ENCODE measurements at regions of chr15 and their contacts with region 1.

Region 1: GRCh38 chr15:25438601-25439368 is at the start of gene UBE3A:
- DNase-seq: peak; percentile 97
- total RNA-seq, gene UBE3A: 87.5 to 103 TPM

Region 2: DNA sequence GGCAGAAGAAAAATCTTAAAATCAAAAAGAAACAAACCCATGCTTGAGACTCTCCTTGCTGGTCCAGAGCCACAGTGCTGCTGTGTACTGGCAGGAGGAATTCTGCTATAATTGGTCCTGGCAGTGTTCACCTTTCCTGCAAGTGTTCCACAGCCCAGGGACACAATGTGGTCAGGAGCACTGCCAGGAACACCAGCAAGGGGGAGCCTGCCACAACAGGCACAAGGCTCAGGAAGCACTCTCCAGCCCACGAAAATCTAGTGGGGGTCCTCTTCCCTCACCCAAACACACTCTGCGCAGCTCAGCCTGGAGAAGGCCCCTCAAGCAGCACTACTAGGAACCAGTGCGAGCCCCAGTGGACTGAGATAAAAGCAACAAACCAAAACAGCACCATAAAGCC is 92.8 kb before region 1 on chr15:
- intact Hi-C with region 1: loop called in 1 of 2 experiments (anchors 10 kb)
- DNase-seq: no peak

Measured in posterior vena cava (tissue), 2 donors.